ENCODE measurements at regions of chr1 and their contacts with region 1.

Region 1: DNA sequence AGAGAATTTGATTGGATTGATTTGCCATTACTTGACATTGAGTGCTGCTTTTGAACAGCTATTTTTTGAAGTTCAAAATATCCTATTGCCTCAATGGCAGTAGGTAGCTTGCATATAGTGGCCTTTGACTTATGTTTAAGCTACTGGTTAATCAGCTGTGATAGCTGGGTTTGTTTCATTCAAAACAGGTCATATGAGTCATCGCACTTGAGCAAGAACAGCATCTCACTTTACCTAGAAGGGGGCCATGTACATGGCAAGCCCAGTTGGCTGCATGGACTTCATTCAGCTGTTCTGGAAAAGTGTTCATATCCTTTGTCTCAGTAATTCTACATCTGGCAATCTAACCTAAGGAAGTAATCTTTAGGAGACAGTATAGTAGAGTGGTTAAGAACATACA is 29.0 kb upstream of the ARID1A start:
- DNase-seq: no peak
- H3K4me3 ChIP-seq: no peak overlapping the region
- H3K4me3 Mint-ChIP-seq: no peak overlapping the region
- H3K27ac ChIP-seq: no peak overlapping the region
- H3K27ac Mint-ChIP-seq: no peak overlapping the region
- H3K4me1 ChIP-seq: no peaks in the 10 kb centered on the region
- H3K4me1 Mint-ChIP-seq: peaks cover 0 to under 1% (median 0%) of the 10 kb centered on the region in 4 donors
- H3K27me3 ChIP-seq: no peaks in the 10 kb centered on the region
- H3K27me3 Mint-ChIP-seq: no peaks in the 10 kb centered on the region

Region 2: DNA sequence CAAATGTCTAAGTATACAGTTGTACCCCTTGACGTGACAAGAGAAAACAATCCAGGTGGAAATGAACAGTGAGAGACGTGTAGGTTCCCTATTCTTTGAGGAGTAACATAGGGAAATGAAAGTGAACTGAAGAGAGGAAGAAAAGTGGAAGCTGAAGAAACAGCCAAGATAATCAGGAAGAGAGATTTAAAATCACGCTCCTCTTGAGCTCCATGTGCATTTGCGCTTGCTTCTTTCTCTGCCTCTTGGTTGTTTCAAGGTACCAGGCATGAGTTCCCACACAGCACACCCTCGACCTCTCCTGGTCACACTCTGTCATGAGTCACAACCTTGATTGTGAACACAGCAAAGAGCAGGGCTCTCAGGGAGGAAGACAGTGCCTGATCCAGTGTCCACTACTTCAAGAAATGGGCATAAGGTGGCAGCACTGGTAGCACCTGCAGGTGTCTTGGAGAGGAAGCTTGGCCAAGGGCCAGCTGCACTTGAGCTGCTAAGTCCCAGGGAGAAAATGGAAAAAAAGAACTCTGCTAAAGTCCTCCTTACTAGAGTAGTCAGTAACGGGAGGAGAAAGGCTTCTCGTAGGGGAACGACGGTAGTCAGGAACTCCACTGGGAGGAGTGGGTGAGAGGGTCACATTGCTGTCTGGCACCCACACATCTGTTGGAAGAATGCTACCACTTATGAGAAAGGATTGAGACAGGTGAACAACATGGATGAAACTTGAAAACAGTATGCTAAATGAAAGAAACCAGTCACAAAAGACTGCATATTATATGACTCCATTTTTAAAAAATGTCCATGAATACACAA is 10.7 kb after region 1 on chr1:
- CTCF ChIA-PET with region 1: interaction called, 13 read pairs
- POLR2A ChIA-PET with region 1: no interaction called
- intact Hi-C with region 1: no loop called
- DNase-seq: peak; percentile 48 to 68 (median 54)
- H3K4me3 ChIP-seq: no peak overlapping the region
- H3K4me3 Mint-ChIP-seq: peak overlapping the region in 7 of 8 donors; percentile 36 to 82 (median 77)
- H3K27ac ChIP-seq: peak overlapping the region; percentile 5
- H3K27ac Mint-ChIP-seq: peak overlapping the region; percentile 24 to 89 (median 74)
- H3K4me1 ChIP-seq: peaks cover 20% of the 10 kb centered on the region
- H3K4me1 Mint-ChIP-seq: peaks cover 11 to 23% (median 14%) of the 10 kb centered on the region in 4 donors
- H3K27me3 ChIP-seq: no peaks in the 10 kb centered on the region
- H3K27me3 Mint-ChIP-seq: no peaks in the 10 kb centered on the region

Region 3: DNA sequence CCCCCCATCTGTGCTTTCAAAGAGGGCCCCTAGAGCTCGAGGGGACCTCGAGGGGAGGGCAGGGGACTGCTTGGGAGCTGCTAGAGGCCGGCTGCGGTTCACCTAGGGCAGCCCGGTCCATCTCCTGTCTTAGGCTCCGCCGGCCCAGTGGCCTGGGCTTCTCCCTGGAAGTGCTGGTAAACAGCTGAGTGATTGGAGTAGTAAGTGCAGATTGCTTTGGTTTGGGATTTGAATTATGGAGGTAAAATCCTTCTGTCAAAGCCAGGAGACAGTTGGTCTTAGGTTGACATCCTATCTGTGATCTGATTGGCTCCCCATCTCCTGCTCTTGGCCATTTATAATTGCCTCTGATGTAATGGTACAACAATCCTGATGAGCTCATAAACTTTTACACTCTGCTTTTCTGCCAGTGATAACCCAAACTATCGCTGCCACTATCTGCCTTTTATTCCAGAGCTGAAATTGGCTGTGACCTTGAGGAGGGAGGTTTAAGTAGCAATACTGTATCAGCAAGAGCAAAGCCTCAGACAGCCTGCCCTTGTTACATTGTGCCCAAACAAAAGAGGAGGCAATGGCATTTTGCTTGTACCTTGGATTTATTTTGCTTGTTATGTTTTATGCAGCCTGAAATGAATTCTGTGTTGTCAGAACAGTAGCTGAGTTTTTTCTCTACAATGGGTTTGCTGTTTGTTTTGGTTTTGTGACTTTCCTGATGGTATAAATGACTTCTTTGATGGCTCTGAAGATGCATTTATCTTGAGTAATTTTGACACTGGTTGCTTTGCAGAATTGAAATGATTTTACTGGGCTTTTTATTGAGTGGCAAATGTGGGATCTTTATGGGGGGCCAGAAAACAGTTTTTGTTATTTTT is 31.4 kb after region 1 on chr1:
- CTCF ChIA-PET with region 1: no interaction called
- POLR2A ChIA-PET with region 1: no interaction called
- intact Hi-C with region 1: no loop called
- DNase-seq: peak; percentile 61 to 85 (median 66)
- H3K4me3 ChIP-seq: peak overlapping the region; percentile 55 to 74
- H3K4me3 Mint-ChIP-seq: no peak overlapping the region
- H3K27ac ChIP-seq: peak overlapping the region; percentile 76
- H3K27ac Mint-ChIP-seq: no peak overlapping the region
- H3K4me1 ChIP-seq: peaks cover 71% of the 10 kb centered on the region
- H3K4me1 Mint-ChIP-seq: peaks cover 15 to 22% (median 18%) of the 10 kb centered on the region in 4 donors
- H3K27me3 ChIP-seq: no peaks in the 10 kb centered on the region
- H3K27me3 Mint-ChIP-seq: no peaks in the 10 kb centered on the region

Measured in CD4-positive, alpha-beta memory T cell (primary cell).